Activated B cell treated with CpG ODN at 0.5 μM for 24 hours (primary cell): ENCODE measurements at regions of chr3 and their contacts with region 1.

Region 1: GRCh38 chr3:138186803-138187295 is 252 bp upstream of the ARMC8 start:
- DNase-seq: no peak
- ATAC-seq: peak; percentile 94
- H3K4me3 Mint-ChIP-seq: peak overlapping the region; percentile 92
- H3K27ac Mint-ChIP-seq: peak overlapping the region; percentile 99
- H3K4me1 Mint-ChIP-seq: peaks cover 37% of the 10 kb centered on the region
- H3K27me3 Mint-ChIP-seq: peaks cover 5% of the 10 kb centered on the region
- CTCF ChIP-seq: no peak

Region 2: GRCh38 chr3:136196401-136197158 is 1990.3 kb before region 1 on chr3:
- CTCF ChIA-PET with region 1: no interaction called
- POLR2A ChIA-PET with region 1: interaction called, 8 read pairs
- intact Hi-C with region 1: loop called (anchors 2 kb)
- DNase-seq: peak; percentile 95
- ATAC-seq: peak; percentile 75
- H3K4me3 Mint-ChIP-seq: peak overlapping the region; percentile 99
- H3K27ac Mint-ChIP-seq: peak overlapping the region; percentile 94
- H3K4me1 Mint-ChIP-seq: peaks cover 47% of the 10 kb centered on the region
- H3K27me3 Mint-ChIP-seq: no peaks in the 10 kb centered on the region
- CTCF ChIP-seq: no peak

Region 3: DNA sequence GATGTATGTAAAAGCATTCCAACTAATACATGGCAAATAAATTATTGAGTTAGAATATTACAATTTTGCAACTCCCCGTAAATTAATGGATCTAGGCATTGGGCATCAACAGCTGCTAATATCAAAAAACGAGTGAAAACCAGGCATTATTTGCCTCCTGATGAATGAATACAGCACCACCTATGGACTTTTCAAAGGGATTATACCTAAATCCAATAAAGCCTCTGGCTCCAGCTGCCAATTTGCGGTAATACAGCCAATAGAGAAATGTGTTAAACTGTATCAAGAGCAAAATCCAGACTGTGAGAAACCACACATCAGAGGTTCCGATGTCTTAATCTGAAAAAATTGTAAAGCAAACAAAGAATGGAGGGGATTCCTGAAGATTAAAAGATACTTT is 38.3 kb before region 1 on chr3:
- CTCF ChIA-PET with region 1: no interaction called
- POLR2A ChIA-PET with region 1: no interaction called
- intact Hi-C with region 1: no loop called
- DNase-seq: no peak
- ATAC-seq: no peak
- H3K4me3 Mint-ChIP-seq: no peak overlapping the region
- H3K27ac Mint-ChIP-seq: no peak overlapping the region
- H3K4me1 Mint-ChIP-seq: no peaks in the 10 kb centered on the region
- H3K27me3 Mint-ChIP-seq: peaks cover 1% of the 10 kb centered on the region
- CTCF ChIP-seq: no peak

Region 4: DNA sequence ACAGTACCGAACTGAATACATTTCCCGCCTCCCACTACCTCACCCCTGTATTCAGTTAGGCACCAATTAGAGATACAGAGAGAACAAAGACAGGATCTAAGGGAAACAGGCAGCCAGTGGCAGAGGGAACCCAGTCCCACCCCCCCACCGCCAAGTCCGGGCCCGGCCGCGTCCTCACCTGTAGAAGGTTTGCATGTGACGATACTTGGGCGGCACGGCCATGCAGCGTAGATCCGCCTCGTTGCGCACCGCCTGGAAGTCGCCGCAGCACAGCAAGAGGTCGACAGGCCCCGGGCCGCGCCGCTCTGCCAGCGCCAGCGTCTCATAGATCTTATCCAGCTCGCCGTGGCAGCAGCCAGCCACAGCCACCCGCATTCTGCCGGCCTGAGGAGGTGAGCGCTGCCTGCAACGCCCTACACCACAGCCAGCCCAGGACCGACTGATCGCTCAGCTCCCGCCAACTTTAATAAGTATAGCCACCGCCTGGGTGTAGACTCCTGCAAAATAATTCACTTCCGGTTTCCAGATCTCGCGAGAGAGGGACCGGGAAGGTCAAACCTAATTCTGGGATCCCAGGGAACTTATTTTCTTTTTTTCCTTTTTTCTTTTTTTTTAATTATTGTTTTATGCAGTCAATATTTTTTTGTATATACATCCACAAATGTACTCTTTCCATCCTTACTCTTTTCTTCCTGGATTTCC is 12.3 kb before region 1 on chr3 and contains the start of gene DBR1:
- CTCF ChIA-PET with region 1: interaction called, 6 read pairs
- POLR2A ChIA-PET with region 1: interaction called, 42 read pairs
- intact Hi-C with region 1: loop called (anchors 1 kb)
- DNase-seq: peak; percentile 64
- ATAC-seq: peak; percentile 92
- H3K4me3 Mint-ChIP-seq: peak within 1 kb of the TSS; percentile 99
- H3K27ac Mint-ChIP-seq: peak within 1 kb of the TSS; percentile 98
- H3K4me1 Mint-ChIP-seq: peaks cover 29% of the 10 kb centered on the region
- H3K27me3 Mint-ChIP-seq: no peaks in the 10 kb centered on the region
- CTCF ChIP-seq: no peak
- total RNA-seq, gene DBR1: 19.6 and 19.9 TPM in 2 replicates

Region 5: DNA sequence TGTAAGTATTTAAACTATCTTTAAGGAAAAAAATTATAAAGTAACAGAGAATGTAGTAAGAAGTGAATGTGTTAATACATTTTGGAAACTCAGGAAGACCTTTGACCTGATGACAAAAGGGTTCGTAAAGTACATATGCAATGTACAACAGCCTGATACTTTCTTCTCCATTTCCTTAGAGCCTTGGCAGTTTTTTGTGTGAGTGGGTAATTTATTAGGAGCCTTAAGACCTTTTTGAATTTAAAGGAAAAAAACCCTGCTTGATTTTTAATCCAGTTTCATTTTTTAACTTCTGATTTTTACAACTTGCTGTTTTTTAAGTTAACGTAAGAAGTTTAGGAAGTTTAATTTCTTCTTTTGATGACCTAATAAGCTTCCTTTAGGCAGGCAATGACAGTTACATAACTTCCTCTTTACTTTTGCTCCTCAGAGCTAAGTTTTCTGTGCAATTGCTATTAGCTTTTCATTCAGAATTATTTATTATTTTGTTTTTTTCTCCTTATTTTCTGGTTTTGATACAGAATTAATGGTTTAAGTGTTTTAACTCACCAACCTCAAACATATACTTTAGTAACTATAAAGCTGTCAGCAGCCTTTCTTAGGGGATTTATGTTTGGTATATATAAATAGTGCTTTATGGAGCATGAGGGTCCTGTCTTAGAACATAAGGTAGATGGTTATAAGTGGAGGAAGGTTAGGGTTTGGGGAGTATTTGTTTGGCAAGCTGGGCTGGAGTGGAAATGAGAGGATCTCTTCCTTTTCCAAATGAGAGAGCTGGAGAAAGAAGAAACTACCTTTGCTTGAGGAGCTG is 35.5 kb after region 1 on chr3:
- CTCF ChIA-PET with region 1: no interaction called
- POLR2A ChIA-PET with region 1: interaction called, 3 read pairs
- intact Hi-C with region 1: loop called (anchors 5 kb)
- DNase-seq: no peak
- ATAC-seq: no peak
- H3K4me3 Mint-ChIP-seq: no peak overlapping the region
- H3K27ac Mint-ChIP-seq: no peak overlapping the region
- H3K4me1 Mint-ChIP-seq: peaks cover 21% of the 10 kb centered on the region
- H3K27me3 Mint-ChIP-seq: no peaks in the 10 kb centered on the region
- CTCF ChIP-seq: no peak

Region 6: DNA sequence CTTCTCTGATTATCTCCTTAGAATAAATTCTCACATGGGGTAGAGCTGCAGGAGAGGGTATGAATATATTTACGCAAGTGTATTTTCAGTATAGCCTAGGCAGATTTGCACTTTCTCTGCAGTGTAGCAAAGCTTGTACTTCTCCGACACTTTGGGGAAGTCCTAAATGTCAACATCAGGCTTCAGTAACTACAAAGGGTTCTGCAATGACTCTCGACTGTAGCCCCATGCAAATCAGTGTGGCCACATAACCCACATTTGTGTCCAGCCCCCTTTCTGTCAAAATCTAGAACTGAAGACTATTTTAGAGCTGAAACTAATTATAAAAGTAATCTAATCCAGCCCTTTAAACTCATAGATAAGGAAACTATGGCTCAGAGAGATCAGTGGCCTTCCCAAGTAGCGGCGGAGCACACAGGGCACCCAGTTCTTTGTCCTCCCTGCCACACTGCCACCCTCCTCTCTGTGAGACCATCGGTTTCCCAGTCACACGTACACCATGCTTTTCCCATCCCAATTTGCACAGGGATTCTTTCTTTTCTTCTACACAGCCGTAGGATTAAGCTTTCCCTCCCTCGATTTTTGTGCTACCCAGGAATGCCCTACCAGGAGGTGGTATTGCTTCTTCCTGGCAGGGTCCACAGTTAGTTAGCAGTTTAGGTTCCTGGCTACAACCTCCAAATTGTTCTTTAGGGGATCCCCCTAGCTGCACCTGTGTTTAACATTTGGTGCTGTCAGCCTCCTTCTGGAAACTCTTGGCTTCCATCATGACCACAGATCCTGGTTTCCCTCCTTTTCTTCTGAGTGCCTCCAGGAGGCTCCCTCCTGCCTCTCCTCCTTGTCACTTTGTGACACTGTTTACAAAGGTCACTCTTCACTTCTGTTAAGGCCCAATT is 184.5 kb after region 1 on chr3:
- CTCF ChIA-PET with region 1: no interaction called
- POLR2A ChIA-PET with region 1: interaction called, 3 read pairs
- intact Hi-C with region 1: loop called (anchors 1 kb)
- DNase-seq: no peak
- ATAC-seq: peak; percentile 94
- H3K4me3 Mint-ChIP-seq: no peak overlapping the region
- H3K27ac Mint-ChIP-seq: no peak overlapping the region
- H3K4me1 Mint-ChIP-seq: peaks cover 14% of the 10 kb centered on the region
- H3K27me3 Mint-ChIP-seq: peaks cover 57% of the 10 kb centered on the region
- CTCF ChIP-seq: no peak

Region 7: DNA sequence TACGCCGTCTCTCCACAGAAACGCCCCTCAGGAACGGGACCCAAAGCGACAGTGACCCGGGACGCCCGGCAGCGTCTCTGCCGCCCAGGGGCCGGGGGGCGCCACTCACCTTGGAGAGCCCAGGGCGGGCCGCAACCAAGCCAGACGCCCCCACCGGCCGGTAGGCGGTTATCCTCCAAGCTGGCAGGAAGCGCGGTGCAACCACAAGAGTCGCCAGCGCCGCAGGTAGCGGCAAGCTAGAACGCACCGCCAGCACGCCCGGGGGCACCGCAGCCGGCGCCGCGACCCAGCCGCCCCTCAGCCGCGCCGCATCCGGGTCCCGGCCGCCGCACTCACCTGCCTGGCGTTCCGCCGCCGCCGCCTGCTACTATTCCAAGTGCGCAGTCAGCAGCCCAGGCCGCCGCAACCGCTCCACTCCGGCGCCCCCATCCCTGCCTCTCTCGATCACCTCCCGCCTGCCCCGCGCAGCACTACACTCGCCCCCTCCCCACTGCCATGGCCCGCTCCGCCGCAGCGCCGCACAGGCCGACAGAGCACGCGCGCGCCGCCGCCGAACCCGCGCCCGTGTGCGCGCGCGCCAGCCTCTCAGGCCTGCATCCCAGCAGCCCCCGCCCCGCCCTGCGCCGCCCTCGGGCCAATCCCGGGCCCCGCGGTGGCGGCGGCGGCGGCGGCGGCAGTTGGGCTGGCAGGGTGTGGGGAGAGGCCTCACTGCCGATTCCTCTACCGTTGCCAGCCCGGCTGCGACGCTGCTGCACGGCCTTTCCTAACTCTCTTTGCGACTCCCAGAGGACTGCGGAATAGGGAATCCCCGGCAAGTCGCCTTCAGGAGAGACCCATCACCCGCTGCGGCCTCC is 647.7 kb after region 1 on chr3 and contains the start of gene PIK3CB:
- CTCF ChIA-PET with region 1: no interaction called
- POLR2A ChIA-PET with region 1: no interaction called
- intact Hi-C with region 1: loop called (anchors 1 kb)
- DNase-seq: peak; percentile 85
- ATAC-seq: peak; percentile 94
- H3K4me3 Mint-ChIP-seq: peak within 1 kb of the TSS; percentile 92
- H3K27ac Mint-ChIP-seq: peak within 1 kb of the TSS; percentile 95
- H3K4me1 Mint-ChIP-seq: peaks cover 24% of the 10 kb centered on the region
- H3K27me3 Mint-ChIP-seq: no peaks in the 10 kb centered on the region
- CTCF ChIP-seq: no peak
- total RNA-seq, gene PIK3CB: 19.9 and 21.9 TPM in 2 replicates

Region 8: DNA sequence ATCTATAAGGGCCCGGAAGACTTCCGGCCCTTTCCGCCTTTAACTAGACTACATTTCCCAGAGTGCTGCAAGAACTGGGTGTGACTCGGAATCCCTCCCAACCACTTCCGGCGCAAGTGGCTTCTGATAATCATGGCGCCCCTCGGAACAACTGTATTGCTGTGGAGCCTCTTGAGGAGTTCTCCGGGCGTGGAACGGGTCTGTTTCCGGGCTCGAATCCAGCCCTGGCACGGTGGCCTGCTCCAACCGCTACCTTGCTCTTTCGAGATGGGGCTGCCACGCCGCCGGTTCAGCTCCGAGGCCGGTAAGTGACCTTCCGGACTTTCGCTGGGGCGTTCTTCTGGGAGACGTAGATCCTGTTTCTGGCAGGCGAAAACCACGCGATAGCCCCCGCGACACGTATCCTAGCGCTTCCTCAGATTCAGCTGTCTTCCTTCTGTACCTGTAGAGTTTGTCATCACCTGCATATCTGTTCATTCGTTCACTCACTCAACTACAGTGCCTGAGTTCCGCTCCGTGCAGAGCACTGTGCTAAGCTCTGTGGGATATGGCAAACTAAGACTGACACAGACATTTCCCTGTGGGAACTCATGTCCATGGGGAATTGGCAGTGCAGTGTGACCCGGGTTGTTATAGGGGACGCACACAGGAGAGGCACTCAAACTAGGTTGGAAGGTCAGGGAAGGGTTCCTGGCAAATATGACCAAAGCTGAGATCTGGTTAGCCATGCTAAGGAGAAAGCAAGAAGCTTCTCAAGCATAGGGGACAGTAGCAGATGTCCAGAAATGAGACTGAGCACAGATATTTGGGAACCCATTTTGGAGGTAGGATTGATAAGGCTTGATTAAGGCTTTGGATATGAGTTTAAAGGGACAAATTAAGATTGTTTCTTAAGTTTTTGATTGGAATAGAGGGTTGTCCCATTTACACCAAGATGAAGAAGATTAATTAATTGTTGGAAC is 1157.3 kb after region 1 on chr3 and contains the start of gene MRPS22:
- CTCF ChIA-PET with region 1: no interaction called
- POLR2A ChIA-PET with region 1: no interaction called
- intact Hi-C with region 1: loop called (anchors 10 kb)
- DNase-seq: peak; percentile 64
- ATAC-seq: peak; percentile 99
- H3K4me3 Mint-ChIP-seq: no peak within 1 kb of the TSS
- H3K27ac Mint-ChIP-seq: peak within 1 kb of the TSS; percentile 4
- H3K4me1 Mint-ChIP-seq: peaks cover 3% of the 10 kb centered on the region
- H3K27me3 Mint-ChIP-seq: peaks cover 16% of the 10 kb centered on the region
- CTCF ChIP-seq: no peak
- total RNA-seq, gene MRPS22: 37.0 and 44.7 TPM in 2 replicates